ENCODE measurements at regions of chr13 and their contacts with region 1.

Region 1: GRCh38 chr13:32310134-32310706 is 4.9 kb downstream of the ZAR1L start:
- DNase-seq: no peak

Region 2: GRCh38 chr13:32019612-32020233 is 290.5 kb before region 1 on chr13:
- intact Hi-C with region 1: loop called (anchors 1 kb)
- DNase-seq: peak in 5 of 10 donors; percentile 9 to 77 (median 28)

Region 3: GRCh38 chr13:32164622-32165268 is 145.5 kb before region 1 on chr13:
- intact Hi-C with region 1: no loop called
- DNase-seq: peak in 3 of 10 donors; percentile 23 to 78 (median 54)

Region 4: GRCh38 chr13:32246468-32246867 is 63.8 kb before region 1 on chr13:
- intact Hi-C with region 1: loop called (anchors 5 kb)
- DNase-seq: peak in 6 of 10 donors; percentile 14 to 82 (median 23)

Measured in posterior cingulate gyrus (tissue), 11 donors.